ENCODE measurements at regions of chr10 and their contacts with region 1.

Region 1: GRCh38 chr10:117047947-117048346 is 43.0 kb upstream of the SHTN1 start:
- DNase-seq: no peak
- ATAC-seq: no peak
- H3K4me3 ChIP-seq: no peak overlapping the region
- H3K27ac ChIP-seq: no peak overlapping the region
- H3K4me1 ChIP-seq: no peaks in the 10 kb centered on the region
- H3K27me3 ChIP-seq: peaks cover 2% of the 10 kb centered on the region
- CTCF ChIP-seq: no peak

Region 2: GRCh38 chr10:116836902-116837523 is 210.9 kb before region 1 on chr10:
- CTCF ChIA-PET with region 1: no interaction called
- POLR2A ChIA-PET with region 1: no interaction called
- in situ Hi-C with region 1: no loop called
- intact Hi-C with region 1: no loop called
- DNase-seq: no peak
- ATAC-seq: no peak
- H3K4me3 ChIP-seq: no peak overlapping the region
- H3K27ac ChIP-seq: no peak overlapping the region
- H3K4me1 ChIP-seq: no peaks in the 10 kb centered on the region; the same call in 1 of the 2 replicates
- H3K27me3 ChIP-seq: no peaks in the 10 kb centered on the region
- CTCF ChIP-seq: peak; percentile 69

Region 3: GRCh38 chr10:116961406-116962251 is 86.3 kb before region 1 on chr10:
- CTCF ChIA-PET with region 1: no interaction called
- POLR2A ChIA-PET with region 1: interaction called, 10 read pairs
- in situ Hi-C with region 1: no loop called
- intact Hi-C with region 1: no loop called
- DNase-seq: no peak
- ATAC-seq: no peak
- H3K4me3 ChIP-seq: no peak overlapping the region
- H3K27ac ChIP-seq: no peak overlapping the region
- H3K4me1 ChIP-seq: no peaks in the 10 kb centered on the region
- H3K27me3 ChIP-seq: no peaks in the 10 kb centered on the region
- CTCF ChIP-seq: no peak

Measured in Panc1 (cell line).